CD14-positive monocyte (primary cell): ENCODE measurements at regions of chr17 and their contacts with region 1.

Region 1: DNA sequence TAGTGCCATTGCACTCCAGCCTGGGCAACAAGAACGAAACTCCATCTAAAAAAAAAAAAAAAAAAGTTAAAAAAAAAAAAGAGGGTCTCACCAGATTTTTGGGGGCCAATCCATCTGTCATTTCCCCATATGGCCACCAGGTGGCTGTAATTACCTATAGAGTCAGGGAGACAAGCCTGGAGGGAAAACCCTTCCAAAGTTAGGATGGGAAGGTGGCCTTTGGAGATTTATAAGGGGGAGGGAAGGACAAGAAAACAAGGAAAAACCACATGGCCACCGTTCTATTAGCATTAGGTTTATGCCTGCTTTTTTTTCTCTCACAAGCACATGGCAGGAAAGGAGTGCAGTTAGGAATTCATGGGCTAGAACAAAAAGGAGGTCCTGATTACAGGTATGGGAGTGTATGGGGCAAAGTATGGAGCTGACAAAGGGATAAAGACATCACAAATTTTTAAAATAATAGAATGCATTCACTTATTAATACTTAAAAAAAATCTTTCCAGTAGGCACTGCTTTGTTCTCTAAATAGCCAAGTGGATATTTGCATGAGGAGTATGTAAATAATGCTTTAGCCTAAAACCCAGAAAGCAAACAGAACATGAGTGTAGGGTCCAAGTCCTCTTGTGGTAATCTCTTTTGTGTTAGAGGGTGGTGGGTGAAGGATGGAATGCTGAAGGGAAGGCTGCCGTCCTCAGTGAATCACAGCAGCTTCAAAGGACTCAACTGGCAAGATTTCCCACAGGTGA is 5.1 kb downstream of the CYB5D1 start:
- DNase-seq: peak in 2 of 3 donors; percentile 42 to 46
- H3K4me3 ChIP-seq: no peak overlapping the region
- H3K4me3 Mint-ChIP-seq: no peak overlapping the region
- H3K27ac ChIP-seq: no peak overlapping the region
- H3K27ac Mint-ChIP-seq: peak overlapping the region in 1 of 7 donors; percentile 22
- H3K4me1 ChIP-seq: peaks cover 20 to 26% of the 10 kb centered on the region in 2 donors
- H3K4me1 Mint-ChIP-seq: peaks cover 13% of the 10 kb centered on the region
- H3K27me3 ChIP-seq: no peaks in the 10 kb centered on the region
- H3K27me3 Mint-ChIP-seq: no peaks in the 10 kb centered on the region
- CTCF ChIP-seq: peak; percentile 95

Region 2: DNA sequence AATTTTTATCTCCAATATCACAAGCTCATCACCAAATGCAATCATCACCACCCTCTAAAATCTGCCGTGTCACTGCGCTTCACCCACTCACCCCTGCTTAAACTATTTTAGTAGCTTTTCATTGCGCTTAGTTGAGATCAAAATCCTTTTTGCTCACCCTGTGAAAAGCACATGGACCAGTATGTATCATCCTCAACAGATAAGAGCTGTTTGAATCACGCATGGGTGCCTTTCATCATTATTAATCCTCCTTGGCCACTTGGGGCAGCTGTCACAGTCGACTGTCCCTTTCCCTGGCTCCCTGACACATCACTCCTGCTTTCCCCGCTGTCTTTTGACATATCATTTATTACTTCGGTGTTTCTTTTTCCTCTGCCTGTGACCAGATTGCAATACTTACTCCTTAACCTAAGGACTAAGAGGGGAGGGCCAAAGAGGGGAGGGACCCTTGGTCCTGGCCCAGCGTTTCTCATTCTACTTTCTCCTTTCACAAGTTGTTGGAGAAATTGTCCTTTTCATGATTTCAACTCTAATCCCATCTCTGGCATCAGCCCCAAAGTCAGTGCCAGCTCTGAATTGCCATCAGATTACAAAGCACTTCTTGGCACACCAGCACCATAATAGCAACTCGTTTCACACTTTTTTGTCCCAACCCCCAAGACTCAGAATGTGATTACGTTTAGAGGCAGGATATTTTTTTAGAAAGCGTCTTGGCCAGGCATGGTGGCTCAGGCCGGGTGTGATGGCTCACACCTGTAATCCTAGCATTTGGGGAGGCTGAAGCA is 37.5 kb before region 1 on chr17:
- intact Hi-C with region 1: no loop called
- DNase-seq: peak in 2 of 3 donors; percentile 45 to 58
- H3K4me3 ChIP-seq: no peak overlapping the region
- H3K4me3 Mint-ChIP-seq: no peak overlapping the region
- H3K27ac ChIP-seq: no peak overlapping the region
- H3K27ac Mint-ChIP-seq: peak overlapping the region in 1 of 7 donors; percentile 3
- H3K4me1 ChIP-seq: no peaks in the 10 kb centered on the region
- H3K4me1 Mint-ChIP-seq: peaks cover 6% of the 10 kb centered on the region
- H3K27me3 ChIP-seq: no peaks in the 10 kb centered on the region
- H3K27me3 Mint-ChIP-seq: peaks cover 5 to 16% (median 13%) of the 10 kb centered on the region in 3 donors
- CTCF ChIP-seq: peak; percentile 20

Region 3: GRCh38 chr17:7873051-7873450 is 10.2 kb after region 1 on chr17:
- intact Hi-C with region 1: loop called in 1 of 2 experiments (anchors 1 kb)
- DNase-seq: no peak
- H3K4me3 ChIP-seq: no peak overlapping the region
- H3K4me3 Mint-ChIP-seq: no peak overlapping the region
- H3K27ac ChIP-seq: no peak overlapping the region
- H3K27ac Mint-ChIP-seq: peak overlapping the region in 5 of 7 donors; percentile 9 to 62 (median 58)
- H3K4me1 ChIP-seq: peaks cover 63 to 83% of the 10 kb centered on the region in 2 donors
- H3K4me1 Mint-ChIP-seq: peaks cover 72% of the 10 kb centered on the region
- H3K27me3 ChIP-seq: no peaks in the 10 kb centered on the region
- H3K27me3 Mint-ChIP-seq: no peaks in the 10 kb centered on the region
- CTCF ChIP-seq: no peak

Region 4: DNA sequence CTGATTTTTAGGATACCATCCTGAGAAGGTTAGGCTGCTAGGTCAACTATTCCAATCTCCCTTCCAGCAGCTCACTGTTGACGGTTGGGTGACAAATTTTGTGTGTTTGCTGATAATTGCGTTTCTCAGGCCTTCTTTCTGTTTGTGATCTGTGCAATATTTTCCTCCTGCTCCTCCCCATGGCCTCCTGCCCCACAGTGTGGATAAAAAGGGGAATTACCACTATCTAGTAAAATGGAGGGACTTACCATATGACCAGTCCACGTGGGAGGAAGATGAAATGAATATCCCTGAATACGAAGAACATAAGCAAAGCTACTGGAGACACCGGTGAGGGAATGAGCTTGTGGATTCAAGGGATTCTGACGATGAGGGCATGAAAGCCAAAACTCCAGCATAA is 34.9 kb after region 1 on chr17:
- intact Hi-C with region 1: loop called (anchors 2 to 5 kb)
- DNase-seq: peak; percentile 52 to 67 (median 54)
- H3K4me3 ChIP-seq: no peak overlapping the region
- H3K4me3 Mint-ChIP-seq: no peak overlapping the region
- H3K27ac ChIP-seq: peak overlapping the region in 1 of 2 donors; percentile 18
- H3K27ac Mint-ChIP-seq: peak overlapping the region in 6 of 7 donors; percentile 13 to 84 (median 54)
- H3K4me1 ChIP-seq: no peaks in the 10 kb centered on the region
- H3K4me1 Mint-ChIP-seq: peaks cover 8% of the 10 kb centered on the region
- H3K27me3 ChIP-seq: no peaks in the 10 kb centered on the region
- H3K27me3 Mint-ChIP-seq: peaks cover 0 to 3% (median 2%) of the 10 kb centered on the region in 3 donors
- CTCF ChIP-seq: peak; percentile 74

Region 5: GRCh38 chr17:7951143-7951803 is 88.4 kb after region 1 on chr17:
- intact Hi-C with region 1: no loop called
- DNase-seq: no peak
- H3K4me3 ChIP-seq: no peak overlapping the region
- H3K4me3 Mint-ChIP-seq: no peak overlapping the region
- H3K27ac ChIP-seq: no peak overlapping the region
- H3K27ac Mint-ChIP-seq: peak overlapping the region in 1 of 7 donors; percentile 67
- H3K4me1 ChIP-seq: peaks cover 0 to 6% of the 10 kb centered on the region in 2 donors
- H3K4me1 Mint-ChIP-seq: peaks cover 16% of the 10 kb centered on the region
- H3K27me3 ChIP-seq: no peaks in the 10 kb centered on the region
- H3K27me3 Mint-ChIP-seq: no peaks in the 10 kb centered on the region
- CTCF ChIP-seq: no peak

Region 6: GRCh38 chr17:7989781-7990655 is 127.2 kb after region 1 on chr17:
- intact Hi-C with region 1: loop called in 1 of 2 experiments (anchors 5 kb)
- DNase-seq: peak; percentile 68 to 73 (median 70)
- H3K4me3 ChIP-seq: peak overlapping the region; percentile 47 to 84 (median 50)
- H3K4me3 Mint-ChIP-seq: peak overlapping the region; percentile 73 to 85
- H3K27ac ChIP-seq: peak overlapping the region; percentile 54 to 65
- H3K27ac Mint-ChIP-seq: peak overlapping the region in 5 of 7 donors; percentile 22 to 87 (median 77)
- H3K4me1 ChIP-seq: peaks cover 21 to 29% of the 10 kb centered on the region in 2 donors
- H3K4me1 Mint-ChIP-seq: peaks cover 23% of the 10 kb centered on the region
- H3K27me3 ChIP-seq: no peaks in the 10 kb centered on the region
- H3K27me3 Mint-ChIP-seq: no peaks in the 10 kb centered on the region
- CTCF ChIP-seq: peak; percentile 99